CD14-positive monocyte (primary cell): ENCODE measurements at regions of chr19 and their contacts with region 1.

Region 1: GRCh38 chr19:10095948-10096621 is 6.4 kb downstream of the ANGPTL6 start:
- DNase-seq: peak; percentile 82 to 93 (median 93)
- H3K4me3 ChIP-seq: peak overlapping the region in 2 of 3 experiments; percentile 36 to 69
- H3K4me3 Mint-ChIP-seq: peak overlapping the region; percentile 59 to 64
- H3K27ac ChIP-seq: peak overlapping the region; percentile 35 to 68
- H3K27ac Mint-ChIP-seq: peak overlapping the region in 2 of 7 donors; percentile 43 to 68
- H3K4me1 ChIP-seq: peaks cover 13 to 17% of the 10 kb centered on the region in 2 donors
- H3K4me1 Mint-ChIP-seq: peaks cover 12% of the 10 kb centered on the region
- H3K27me3 ChIP-seq: no peaks in the 10 kb centered on the region
- H3K27me3 Mint-ChIP-seq: peaks cover 1% of the 10 kb centered on the region in 3 donors
- CTCF ChIP-seq: no peak

Region 2: GRCh38 chr19:9445037-9445436 is 651.0 kb before region 1 on chr19:
- intact Hi-C with region 1: loop called in 1 of 2 experiments (anchors 10 kb)
- DNase-seq: no peak
- H3K4me3 ChIP-seq: no peak overlapping the region
- H3K4me3 Mint-ChIP-seq: no peak overlapping the region
- H3K27ac ChIP-seq: no peak overlapping the region
- H3K27ac Mint-ChIP-seq: no peak overlapping the region
- H3K4me1 ChIP-seq: no peaks in the 10 kb centered on the region
- H3K4me1 Mint-ChIP-seq: no peaks in the 10 kb centered on the region
- H3K27me3 ChIP-seq: no peaks in the 10 kb centered on the region
- H3K27me3 Mint-ChIP-seq: peaks cover 0 to 5% (median 2%) of the 10 kb centered on the region in 3 donors
- CTCF ChIP-seq: no peak

Region 3: GRCh38 chr19:9932835-9933234 is 163.2 kb before region 1 on chr19:
- intact Hi-C with region 1: no loop called
- DNase-seq: no peak
- H3K4me3 ChIP-seq: no peak overlapping the region
- H3K4me3 Mint-ChIP-seq: peak overlapping the region in 1 of 2 donors; percentile 17
- H3K27ac ChIP-seq: no peak overlapping the region
- H3K27ac Mint-ChIP-seq: no peak overlapping the region
- H3K4me1 ChIP-seq: peaks cover 0 to 1% of the 10 kb centered on the region in 2 donors
- H3K4me1 Mint-ChIP-seq: peaks cover 15% of the 10 kb centered on the region
- H3K27me3 ChIP-seq: peaks cover 22 to 36% of the 10 kb centered on the region in 2 donors
- H3K27me3 Mint-ChIP-seq: peaks cover 41 to 56% (median 42%) of the 10 kb centered on the region in 3 donors
- CTCF ChIP-seq: no peak

Region 4: DNA sequence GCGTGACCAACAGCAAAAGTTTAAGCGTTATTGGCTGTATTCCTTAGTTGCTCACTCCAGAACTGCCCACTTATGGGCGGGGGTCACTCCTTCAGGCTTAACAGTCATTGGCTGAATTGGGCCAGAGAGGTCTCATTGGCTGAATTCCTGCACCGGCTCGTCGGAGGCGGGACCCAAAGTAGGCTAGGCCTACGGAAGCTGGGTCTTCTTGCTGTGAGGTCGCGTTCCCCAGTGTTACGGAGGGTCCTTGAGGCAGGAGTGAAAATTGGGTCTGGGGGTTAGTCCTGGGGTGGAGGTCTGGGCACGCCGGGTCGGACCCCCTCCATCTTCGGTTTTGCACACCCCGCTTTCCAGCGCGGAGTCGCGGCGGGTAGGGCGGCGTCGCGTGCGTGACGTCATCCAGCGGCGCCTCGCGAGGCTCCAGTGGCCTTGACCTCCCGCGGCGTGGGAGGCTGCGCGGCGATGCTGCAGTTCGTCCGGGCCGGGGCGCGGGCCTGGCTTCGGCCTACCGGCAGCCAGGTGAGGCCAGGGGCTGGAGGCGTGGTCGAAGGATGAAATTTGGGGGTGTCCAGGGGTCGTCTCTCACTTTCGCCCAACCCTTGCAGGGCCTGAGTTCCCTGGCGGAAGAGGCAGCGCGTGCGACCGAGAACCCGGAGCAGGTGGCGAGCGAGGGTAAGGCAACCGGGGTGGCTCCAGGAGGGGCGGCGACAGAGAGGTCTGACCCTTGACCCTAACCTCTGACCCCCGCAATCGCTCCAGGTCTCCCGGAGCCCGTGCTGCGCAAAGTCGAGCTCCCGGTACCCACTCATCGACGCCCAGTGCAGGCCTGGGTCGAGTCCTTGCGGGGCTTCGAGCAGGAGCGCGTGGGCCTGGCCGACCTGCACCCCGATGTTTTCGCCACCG is 156.0 kb after region 1 on chr19 and contains the start of gene MRPL4:
- intact Hi-C with region 1: loop called (anchors 5 kb)
- DNase-seq: peak; percentile 97 to 99 (median 98)
- H3K4me3 ChIP-seq: peak within 1 kb of the TSS; percentile 56 to 98 (median 86)
- H3K4me3 Mint-ChIP-seq: peak within 1 kb of the TSS; percentile 96 to 97
- H3K27ac ChIP-seq: peak within 1 kb of the TSS; percentile 47 to 88
- H3K27ac Mint-ChIP-seq: peak within 1 kb of the TSS; percentile 88 to 99 (median 94)
- H3K4me1 ChIP-seq: peaks cover 16 to 28% of the 10 kb centered on the region in 2 donors
- H3K4me1 Mint-ChIP-seq: peaks cover 12% of the 10 kb centered on the region
- H3K27me3 ChIP-seq: no peaks in the 10 kb centered on the region
- H3K27me3 Mint-ChIP-seq: peaks cover 0 to 3% (median 1%) of the 10 kb centered on the region in 3 donors
- CTCF ChIP-seq: no peak
- polyA plus RNA-seq, gene MRPL4: 20.4 to 40.2 (median 22.7) TPM